ENCODE measurements at regions of chr6 and their contacts with region 1.

Region 1: DNA sequence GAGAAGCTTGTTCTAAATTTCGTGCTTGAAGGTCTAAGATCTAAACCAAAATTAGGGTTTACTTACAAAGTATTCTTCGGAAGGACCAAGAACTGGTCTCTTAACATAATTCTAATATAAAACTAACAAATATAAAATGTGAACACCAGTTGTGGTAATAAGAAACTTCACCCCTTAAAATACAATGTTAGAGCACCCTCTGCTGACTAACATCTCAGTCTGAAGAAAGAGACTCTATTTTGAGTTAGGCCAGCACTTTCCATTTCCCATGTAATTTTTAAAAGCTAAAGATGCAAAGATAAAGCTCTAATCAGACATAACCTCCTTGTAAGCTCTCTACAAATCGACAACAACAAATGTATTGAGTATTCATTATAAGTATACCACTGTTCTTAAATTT is 24.6 kb downstream of the ATG5 start:
- DNase-seq: no peak
- H3K4me3 Mint-ChIP-seq: no peak overlapping the region
- H3K27ac Mint-ChIP-seq: no peak overlapping the region
- H3K4me1 Mint-ChIP-seq: no peaks in the 10 kb centered on the region
- H3K27me3 Mint-ChIP-seq: no peaks in the 10 kb centered on the region

Region 2: DNA sequence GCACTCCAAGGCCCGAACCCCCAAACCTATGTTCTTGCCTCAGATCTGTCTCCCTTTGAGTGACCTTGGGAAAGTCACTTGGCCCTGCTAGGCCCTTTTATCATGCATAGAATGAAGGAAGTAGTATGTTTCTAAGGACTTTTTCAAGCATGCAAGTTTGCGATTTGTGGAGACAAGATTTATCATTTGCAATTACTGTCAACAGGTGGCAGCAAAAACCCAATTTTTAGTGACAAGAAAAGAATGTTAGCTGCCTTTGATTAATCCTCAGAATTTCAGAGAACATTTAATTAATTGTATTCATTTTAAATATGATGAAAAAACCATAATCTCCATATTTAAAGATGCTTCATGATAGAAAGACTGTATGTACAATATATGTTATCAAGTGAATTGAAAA is 869.7 kb before region 1 on chr6:
- CTCF ChIA-PET with region 1: no interaction called
- intact Hi-C with region 1: loop called (anchors 1 kb)
- DNase-seq: peak; percentile 10
- H3K4me3 Mint-ChIP-seq: no peak overlapping the region
- H3K27ac Mint-ChIP-seq: no peak overlapping the region
- H3K4me1 Mint-ChIP-seq: no peaks in the 10 kb centered on the region
- H3K27me3 Mint-ChIP-seq: peaks cover 7% of the 10 kb centered on the region

Region 3: DNA sequence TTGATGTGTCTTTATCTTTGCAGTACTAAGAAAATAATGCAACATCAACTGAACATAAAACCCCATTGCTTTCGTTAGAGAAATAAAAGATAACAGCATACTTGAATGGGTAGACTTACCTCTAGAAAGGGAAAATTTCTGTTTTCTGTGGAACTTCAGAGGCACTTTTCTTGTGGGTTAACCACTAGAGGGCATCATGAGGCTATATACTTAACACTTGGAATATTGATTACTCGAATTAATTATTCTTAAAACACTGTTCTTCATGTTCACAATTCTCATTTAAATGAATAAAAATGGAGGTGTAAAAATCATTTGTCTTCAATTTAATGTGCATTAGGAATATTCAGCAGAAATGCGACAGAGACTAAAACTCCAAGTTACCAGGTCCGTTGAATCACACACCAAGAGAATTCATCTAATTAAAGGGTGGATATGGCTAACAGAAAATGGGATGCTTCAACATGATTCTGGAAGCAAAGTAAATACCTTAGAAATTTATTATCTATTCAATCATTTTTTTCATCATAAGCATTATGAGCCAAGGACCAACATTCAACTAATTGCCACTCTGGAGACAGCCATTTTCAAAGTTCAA is 567.3 kb before region 1 on chr6:
- CTCF ChIA-PET with region 1: interaction called, 6 read pairs
- intact Hi-C with region 1: loop called (anchors 1 kb)
- DNase-seq: no peak
- H3K4me3 Mint-ChIP-seq: no peak overlapping the region
- H3K27ac Mint-ChIP-seq: no peak overlapping the region
- H3K4me1 Mint-ChIP-seq: peaks cover 3% of the 10 kb centered on the region
- H3K27me3 Mint-ChIP-seq: no peaks in the 10 kb centered on the region

Region 4: GRCh38 chr6:105793130-105793529 is 507.8 kb before region 1 on chr6:
- CTCF ChIA-PET with region 1: no interaction called
- intact Hi-C with region 1: loop called (anchors 5 kb)
- DNase-seq: peak; percentile 30
- H3K4me3 Mint-ChIP-seq: no peak overlapping the region
- H3K27ac Mint-ChIP-seq: no peak overlapping the region
- H3K4me1 Mint-ChIP-seq: peaks cover 43% of the 10 kb centered on the region
- H3K27me3 Mint-ChIP-seq: no peaks in the 10 kb centered on the region

Region 5: GRCh38 chr6:106325336-106326178 is 24.6 kb after region 1 on chr6 and contains the start of gene ATG5:
- CTCF ChIA-PET with region 1: no interaction called
- intact Hi-C with region 1: no loop called
- DNase-seq: peak; percentile 100
- H3K4me3 Mint-ChIP-seq: peak within 1 kb of the TSS; percentile 99
- H3K27ac Mint-ChIP-seq: peak within 1 kb of the TSS; percentile 89
- H3K4me1 Mint-ChIP-seq: peaks cover 39% of the 10 kb centered on the region
- H3K27me3 Mint-ChIP-seq: no peaks in the 10 kb centered on the region
- total RNA-seq, gene ATG5: 20.2 to 20.7 TPM